ENCODE measurements at regions of chr2 and their contacts with region 1.

Region 1: DNA sequence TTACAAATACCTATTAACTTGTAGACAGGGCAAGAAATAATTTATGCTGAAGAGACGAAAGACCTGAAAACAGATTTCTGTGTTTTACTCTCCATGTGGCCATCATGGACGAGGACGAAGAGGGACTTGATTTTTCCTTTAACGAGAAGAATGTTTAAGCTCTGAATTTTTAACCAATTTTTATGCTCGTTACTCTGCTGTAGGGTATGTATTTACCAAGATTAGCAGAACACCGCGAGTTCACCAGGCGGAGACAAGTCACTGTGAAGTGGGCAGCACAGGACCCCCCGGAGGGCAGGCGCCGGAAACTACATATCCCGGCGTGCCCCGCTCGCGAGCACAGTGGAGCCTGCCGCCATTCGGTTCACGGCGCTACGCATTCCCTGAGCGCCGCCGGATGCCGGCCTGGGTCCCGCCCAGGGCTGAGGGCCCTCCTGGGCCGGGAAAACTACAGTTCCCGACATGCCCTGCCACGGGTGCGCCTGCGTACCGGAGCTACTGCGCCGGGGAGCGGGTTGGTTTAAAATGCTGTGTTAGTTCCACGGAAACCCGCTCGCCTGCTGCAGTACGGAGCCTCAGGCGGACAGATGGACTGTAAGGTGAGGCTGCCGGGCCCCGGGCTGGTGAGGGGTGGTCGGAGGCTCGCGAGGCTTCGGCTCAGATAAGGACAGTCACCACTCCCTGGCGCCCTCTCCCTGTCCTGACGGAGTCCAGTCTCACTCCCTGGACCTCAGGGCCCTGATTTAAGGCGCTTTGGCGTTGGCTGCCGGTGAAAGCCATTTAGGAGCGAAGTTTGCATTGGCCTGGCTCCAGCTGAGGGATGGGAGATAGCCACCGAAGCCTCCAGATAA is at the start of gene CCDC150:
- DNase-seq: peak; percentile 97
- ATAC-seq: peak; percentile 100
- H3K4me3 ChIP-seq: peak within 1 kb of the TSS; percentile 80
- H3K27ac ChIP-seq: 0 out of 2 replicates have a peak within 1 kb of the TSS, but pooled peaks have one; percentile 5
- H3K4me1 ChIP-seq: peaks cover 7% of the 10 kb centered on the region; the same call in 1 of the 2 replicates
- H3K27me3 ChIP-seq: no peaks in the 10 kb centered on the region
- CTCF ChIP-seq: peak; percentile 47
- total RNA-seq, gene CCDC150: 13.1 and 15.6 TPM in 2 replicates

Region 2: GRCh38 chr2:196468394-196468793 is 171.0 kb before region 1 on chr2:
- CTCF ChIA-PET with region 1: no interaction called
- POLR2A ChIA-PET with region 1: no interaction called
- intact Hi-C with region 1: no loop called
- DNase-seq: peak; percentile 23
- ATAC-seq: no peak
- H3K4me3 ChIP-seq: no peak overlapping the region
- H3K27ac ChIP-seq: no peak overlapping the region
- H3K4me1 ChIP-seq: peaks cover 9% of the 10 kb centered on the region
- H3K27me3 ChIP-seq: no peaks in the 10 kb centered on the region
- CTCF ChIP-seq: peak; percentile 60

Region 3: DNA sequence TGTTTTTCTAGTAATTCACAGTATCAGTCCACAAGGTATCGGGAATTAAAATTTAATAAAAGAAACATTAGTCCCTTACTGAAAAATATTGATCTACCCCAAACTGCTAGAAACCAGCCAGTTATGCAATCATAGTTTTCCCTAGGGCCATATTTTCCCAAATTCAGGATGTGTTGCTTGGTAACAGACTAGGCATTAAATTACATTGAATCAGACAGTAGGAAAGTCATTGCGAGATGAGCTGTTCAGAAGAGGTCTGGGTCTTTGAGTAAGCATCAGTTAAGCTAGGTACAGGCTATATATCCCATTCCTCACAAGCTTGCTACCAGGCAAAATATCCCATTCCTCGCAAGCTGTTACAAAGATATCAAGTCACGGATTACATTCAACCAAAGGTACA is 122.8 kb before region 1 on chr2:
- CTCF ChIA-PET with region 1: no interaction called
- POLR2A ChIA-PET with region 1: no interaction called
- intact Hi-C with region 1: no loop called
- DNase-seq: no peak
- ATAC-seq: no peak
- H3K4me3 ChIP-seq: no peak overlapping the region
- H3K27ac ChIP-seq: no peak overlapping the region
- H3K4me1 ChIP-seq: no peaks in the 10 kb centered on the region
- H3K27me3 ChIP-seq: no peaks in the 10 kb centered on the region
- CTCF ChIP-seq: no peak

Region 4: DNA sequence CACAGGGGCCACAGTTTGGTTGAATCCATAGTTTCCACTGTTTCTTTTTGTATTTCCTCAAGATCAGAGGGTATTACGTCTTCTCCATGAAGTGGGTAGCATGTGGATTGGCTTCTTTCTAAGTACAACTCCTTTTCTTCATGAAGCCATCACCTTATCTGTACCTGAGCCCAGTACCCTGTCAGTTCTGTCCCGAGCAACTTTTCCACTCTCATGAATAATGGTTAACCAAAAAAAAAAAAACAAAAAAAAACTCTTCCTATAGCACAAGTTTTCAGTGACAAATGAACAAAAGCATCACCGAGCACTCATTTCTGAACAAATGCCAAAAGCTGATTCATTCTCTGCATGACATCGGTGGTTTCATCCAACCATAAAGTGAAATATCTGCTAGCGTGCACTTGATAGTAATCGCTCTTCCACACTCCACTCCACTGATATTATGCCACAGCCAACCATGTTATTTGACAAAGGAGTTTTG is 52.9 kb before region 1 on chr2:
- CTCF ChIA-PET with region 1: no interaction called
- POLR2A ChIA-PET with region 1: no interaction called
- intact Hi-C with region 1: loop called (anchors 5 kb)
- DNase-seq: peak; percentile 97
- ATAC-seq: peak; percentile 59
- H3K4me3 ChIP-seq: no peak overlapping the region
- H3K27ac ChIP-seq: peak overlapping the region; percentile 83
- H3K4me1 ChIP-seq: peaks cover 36% of the 10 kb centered on the region
- H3K27me3 ChIP-seq: no peaks in the 10 kb centered on the region
- CTCF ChIP-seq: no peak

Region 5: DNA sequence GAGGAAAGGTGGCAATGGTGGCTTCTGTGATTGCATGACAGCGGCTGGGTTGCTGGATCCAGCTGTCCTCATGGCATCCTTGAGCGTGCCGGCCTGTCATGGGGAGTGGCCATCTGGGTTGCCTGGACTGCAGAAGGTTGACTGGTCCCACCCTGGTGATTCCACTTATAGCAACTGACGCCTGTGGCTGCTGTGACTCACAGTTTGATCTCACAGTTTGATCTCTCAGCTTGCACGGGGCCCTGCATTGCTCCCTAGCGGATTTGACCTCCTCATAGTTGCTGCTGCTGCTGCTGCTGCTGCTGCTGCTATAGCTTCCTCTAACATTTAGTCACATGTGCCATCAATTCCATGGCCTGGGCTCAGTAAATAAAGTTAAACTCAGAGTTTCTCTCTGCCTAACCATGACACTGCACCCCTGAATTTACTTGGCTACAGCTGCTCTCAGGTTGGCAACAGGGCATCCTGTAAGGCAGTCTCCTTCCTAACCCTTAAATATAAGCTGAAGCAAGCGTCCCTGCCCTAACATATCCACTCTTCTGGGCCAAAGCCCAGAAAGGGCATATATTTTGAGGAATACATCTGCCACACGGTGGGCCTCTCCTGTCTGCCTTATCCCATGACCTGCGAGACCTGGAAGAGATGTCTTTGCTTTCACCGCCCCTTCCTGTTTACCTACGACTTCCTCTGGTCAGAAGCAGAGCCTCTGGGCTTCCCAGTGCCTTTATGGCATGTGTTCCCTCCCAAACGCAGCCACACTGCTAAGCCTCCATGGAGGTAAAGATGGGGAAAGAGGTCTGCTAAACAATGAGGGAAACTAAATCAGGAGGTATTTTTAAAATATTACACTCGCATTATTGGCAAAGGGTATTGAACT is 37.7 kb before region 1 on chr2:
- CTCF ChIA-PET with region 1: no interaction called
- POLR2A ChIA-PET with region 1: no interaction called
- intact Hi-C with region 1: loop called (anchors 2 kb)
- DNase-seq: peak; percentile 88
- ATAC-seq: peak; percentile 100
- H3K4me3 ChIP-seq: no peak overlapping the region
- H3K27ac ChIP-seq: peak overlapping the region; percentile 86
- H3K4me1 ChIP-seq: peaks cover 17% of the 10 kb centered on the region
- H3K27me3 ChIP-seq: no peaks in the 10 kb centered on the region
- CTCF ChIP-seq: no peak; the same call in 1 of the 2 replicates